ENCODE measurements at regions of chr12 and their contacts with region 1.

Region 1: DNA sequence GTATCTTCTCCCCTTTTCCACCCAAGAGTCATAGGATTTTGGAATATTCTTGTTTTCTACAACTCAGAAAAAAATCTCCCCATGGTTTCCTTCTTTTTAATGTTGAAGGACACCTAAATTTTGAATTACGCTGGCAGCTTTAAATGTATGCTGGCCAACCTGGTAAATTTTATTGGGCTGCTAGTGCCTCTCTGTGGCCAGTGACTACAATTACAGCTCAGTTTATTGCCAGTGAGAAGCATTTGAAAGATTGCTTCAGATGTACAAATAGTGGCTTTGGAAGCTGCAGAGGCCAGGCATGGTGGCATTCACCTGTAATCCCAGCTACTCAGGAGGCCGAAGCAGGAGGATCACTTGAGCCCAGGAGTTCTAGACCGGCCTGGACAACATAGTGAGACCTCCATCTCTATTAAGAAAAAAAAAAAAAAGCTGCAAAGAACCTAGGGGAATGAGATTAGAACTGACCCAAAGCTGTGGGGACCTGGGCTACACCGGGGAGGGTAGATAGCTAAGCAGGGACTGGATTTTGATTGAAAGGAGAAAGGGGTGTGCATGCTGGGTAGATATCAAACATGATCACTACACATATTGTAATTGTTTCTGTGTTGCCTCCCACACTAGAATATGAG is 7.6 kb upstream of the RAB21 start:
- DNase-seq: peak; percentile 65
- H3K4me3 Mint-ChIP-seq: no peak overlapping the region
- H3K27ac Mint-ChIP-seq: no peak overlapping the region
- H3K4me1 Mint-ChIP-seq: no peaks in the 10 kb centered on the region
- H3K27me3 Mint-ChIP-seq: peaks cover 11% of the 10 kb centered on the region

Region 2: GRCh38 chr12:70733385-70733784 is 1013.7 kb before region 1 on chr12:
- CTCF ChIA-PET with region 1: no interaction called
- intact Hi-C with region 1: loop called (anchors 1 kb)
- DNase-seq: peak; percentile 16
- H3K4me3 Mint-ChIP-seq: no peak overlapping the region
- H3K27ac Mint-ChIP-seq: no peak overlapping the region
- H3K4me1 Mint-ChIP-seq: no peaks in the 10 kb centered on the region
- H3K27me3 Mint-ChIP-seq: peaks cover 4% of the 10 kb centered on the region

Region 3: GRCh38 chr12:71392521-71393145 is 354.5 kb before region 1 on chr12:
- CTCF ChIA-PET with region 1: interaction called, 12 read pairs
- intact Hi-C with region 1: no loop called
- DNase-seq: no peak
- H3K4me3 Mint-ChIP-seq: no peak overlapping the region
- H3K27ac Mint-ChIP-seq: no peak overlapping the region
- H3K4me1 Mint-ChIP-seq: no peaks in the 10 kb centered on the region
- H3K27me3 Mint-ChIP-seq: peaks cover 12% of the 10 kb centered on the region

Region 4: GRCh38 chr12:71415336-71416231 is 331.5 kb before region 1 on chr12:
- CTCF ChIA-PET with region 1: interaction called, 59 read pairs
- intact Hi-C with region 1: loop called (anchors 1 kb)
- DNase-seq: peak; percentile 46
- H3K4me3 Mint-ChIP-seq: no peak overlapping the region
- H3K27ac Mint-ChIP-seq: no peak overlapping the region
- H3K4me1 Mint-ChIP-seq: no peaks in the 10 kb centered on the region
- H3K27me3 Mint-ChIP-seq: peaks cover 8% of the 10 kb centered on the region

Region 5: DNA sequence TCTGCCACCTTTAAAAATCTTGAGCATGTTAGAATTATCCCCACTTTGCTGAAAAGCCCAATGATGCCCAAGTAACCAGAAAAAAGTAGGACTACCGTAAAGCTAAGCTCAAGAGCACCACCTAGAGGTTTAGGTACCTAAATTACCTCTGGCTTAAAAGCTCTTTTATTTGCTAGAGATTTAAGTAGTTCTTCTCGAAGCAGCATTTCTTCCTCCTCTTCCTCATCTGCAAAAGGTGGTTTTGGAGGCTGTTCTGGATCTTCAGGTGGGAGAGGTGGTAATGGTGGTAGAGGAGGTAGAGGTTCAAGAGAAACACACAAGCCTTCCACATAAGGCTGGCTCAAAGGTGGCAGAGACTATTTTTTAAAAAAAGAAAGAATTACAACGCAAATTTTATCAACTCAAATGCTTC is 110.4 kb before region 1 on chr12:
- CTCF ChIA-PET with region 1: interaction called, 9 read pairs
- intact Hi-C with region 1: loop called (anchors 1 kb)
- DNase-seq: no peak
- H3K4me3 Mint-ChIP-seq: no peak overlapping the region
- H3K27ac Mint-ChIP-seq: no peak overlapping the region
- H3K4me1 Mint-ChIP-seq: peaks cover 20% of the 10 kb centered on the region
- H3K27me3 Mint-ChIP-seq: no peaks in the 10 kb centered on the region

Region 6: GRCh38 chr12:71685914-71686665 is 61.0 kb before region 1 on chr12 and contains the start of gene TMEM19:
- CTCF ChIA-PET with region 1: interaction called, 15 read pairs
- intact Hi-C with region 1: loop called (anchors 1 kb)
- DNase-seq: peak; percentile 81
- H3K4me3 Mint-ChIP-seq: peak within 1 kb of the TSS; percentile 98
- H3K27ac Mint-ChIP-seq: peak within 1 kb of the TSS; percentile 96
- H3K4me1 Mint-ChIP-seq: peaks cover 27% of the 10 kb centered on the region
- H3K27me3 Mint-ChIP-seq: no peaks in the 10 kb centered on the region
- total RNA-seq, gene TMEM19: 10.9 to 11.1 TPM

Region 7: GRCh38 chr12:71799106-71799505 is 52.0 kb after region 1 on chr12:
- CTCF ChIA-PET with region 1: no interaction called
- intact Hi-C with region 1: no loop called
- DNase-seq: no peak
- H3K4me3 Mint-ChIP-seq: no peak overlapping the region
- H3K27ac Mint-ChIP-seq: no peak overlapping the region
- H3K4me1 Mint-ChIP-seq: no peaks in the 10 kb centered on the region
- H3K27me3 Mint-ChIP-seq: peaks cover 6% of the 10 kb centered on the region